ENCODE measurements at regions of chr12 and their contacts with region 1.

Region 1: DNA sequence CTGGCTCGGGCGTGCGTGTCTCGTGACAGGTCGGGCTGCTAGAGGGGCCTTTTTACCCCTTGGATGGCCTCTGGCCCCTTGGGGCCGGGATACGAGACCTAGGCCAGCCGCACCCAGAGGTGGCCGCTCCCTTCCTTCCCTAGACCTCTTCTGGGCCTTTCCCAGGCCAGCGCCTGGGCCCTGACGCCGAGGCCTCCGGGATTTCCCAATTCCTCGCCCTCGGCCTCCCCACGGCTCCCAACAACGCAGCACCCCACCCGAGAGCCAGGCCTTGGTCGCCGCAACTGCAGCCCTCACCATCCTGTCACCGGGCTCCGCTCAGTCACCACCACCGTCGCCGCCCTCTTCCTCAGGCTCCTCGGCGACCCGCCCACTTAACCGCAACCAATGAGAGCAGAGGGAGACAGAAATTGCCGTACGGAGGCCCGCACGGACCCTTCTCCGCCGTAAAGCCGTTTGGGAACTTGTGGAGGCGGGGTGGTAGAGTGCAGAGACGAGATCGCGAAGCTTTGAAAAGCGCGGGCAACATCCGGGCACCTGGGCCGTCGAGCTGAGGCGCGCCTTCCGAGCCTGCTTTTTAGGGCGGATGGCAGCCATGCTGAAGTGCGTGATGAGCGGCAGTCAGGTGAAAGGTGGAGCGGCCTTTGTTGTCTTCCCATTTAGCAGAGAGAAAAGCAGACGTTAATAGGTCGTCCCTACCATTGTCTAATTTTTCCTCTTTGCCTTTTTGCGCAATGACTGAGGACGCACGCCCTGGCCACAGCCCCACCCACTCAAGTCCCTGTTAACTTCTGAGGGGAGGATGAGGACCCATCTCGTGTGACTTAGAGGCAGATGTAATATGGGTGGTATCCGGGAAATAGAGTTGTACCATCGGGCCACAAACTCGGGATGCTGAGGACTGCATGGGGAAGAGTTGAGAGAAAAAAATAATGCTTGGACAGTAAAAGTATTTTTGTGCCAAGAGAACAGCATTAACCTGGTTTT is at the starts of genes RAD9B and VPS29:
- DNase-seq: peak; percentile 99
- H3K4me3 ChIP-seq: peak within 1 kb of the TSS; percentile 58 to 98 (median 93)
- H3K27ac ChIP-seq: peak within 1 kb of the TSS; percentile 90 to 99 (median 96)
- H3K4me1 ChIP-seq: peaks cover 24 to 53% (median 42%) of the 10 kb centered on the region in 6 donors
- H3K27me3 ChIP-seq: no peaks in the 10 kb centered on the region
- CTCF ChIP-seq: peak in 4 of 11 experiments; percentile 1 to 28 (median 20)
- POLR2A ChIP-seq: peak; percentile 68 to 84 (median 79)
- total RNA-seq, gene RAD9B: 0.67 to 2.2 (median 1.4) TPM
- total RNA-seq, gene VPS29: 77.9 to 131 (median 103) TPM

Region 2: DNA sequence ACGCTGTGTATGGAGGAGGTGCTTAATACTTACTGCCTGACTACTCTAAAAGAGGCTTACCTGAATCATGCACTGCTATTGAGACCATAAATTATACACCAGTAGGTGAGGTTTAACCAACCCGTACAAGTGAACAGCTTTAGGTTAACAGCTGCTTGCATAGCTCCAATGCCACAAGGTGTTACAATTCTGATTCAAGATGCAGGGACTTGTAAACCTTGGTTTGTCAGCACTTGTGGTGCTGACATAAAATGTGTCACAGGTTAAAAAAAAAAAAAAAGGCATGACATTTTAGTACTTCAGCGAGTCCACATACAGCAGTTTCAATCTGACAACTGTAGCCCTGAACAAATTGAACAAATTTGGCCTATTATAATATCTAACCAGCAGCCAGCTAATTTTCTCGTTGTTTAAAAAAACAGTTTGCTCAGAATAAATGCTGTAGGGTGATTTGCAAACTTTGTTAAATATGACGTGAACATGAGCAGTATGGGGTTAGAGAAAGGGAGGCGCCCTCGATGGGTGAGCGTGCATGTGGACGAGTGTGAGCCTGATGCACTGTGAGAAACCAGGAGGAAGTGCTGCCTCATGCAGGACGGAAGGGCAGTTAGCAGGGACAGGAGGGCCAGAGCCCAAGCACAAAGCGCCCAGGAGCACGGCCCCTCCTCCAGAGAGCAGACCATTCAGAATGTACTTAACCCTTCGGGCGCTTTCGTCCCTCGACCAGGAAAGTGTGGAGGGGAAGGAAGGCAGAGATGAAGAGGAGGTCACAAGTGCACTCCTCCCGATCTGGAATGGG is 557.3 kb before region 1 on chr12:
- intact Hi-C with region 1: no loop called
- DNase-seq: no peak
- H3K4me3 ChIP-seq: no peak overlapping the region
- H3K27ac ChIP-seq: peak overlapping the region in 6 of 8 donors; percentile 43 to 71 (median 64)
- H3K4me1 ChIP-seq: peaks cover 25 to 68% (median 53%) of the 10 kb centered on the region in 6 donors
- H3K27me3 ChIP-seq: no peaks in the 10 kb centered on the region
- CTCF ChIP-seq: no peak
- POLR2A ChIP-seq: no peak

Region 3: GRCh38 chr12:110449799-110450497 is 52.1 kb before region 1 on chr12 and contains the start of gene ARPC3:
- intact Hi-C with region 1: loop called (anchors 10 kb)
- DNase-seq: peak; percentile 99
- H3K4me3 ChIP-seq: peak within 1 kb of the TSS; percentile 69 to 89 (median 78)
- H3K27ac ChIP-seq: peak within 1 kb of the TSS; percentile 94 to 98 (median 96)
- H3K4me1 ChIP-seq: peaks cover 27 to 76% (median 55%) of the 10 kb centered on the region in 6 donors
- H3K27me3 ChIP-seq: no peaks in the 10 kb centered on the region
- CTCF ChIP-seq: peak; percentile 82 to 99 (median 94)
- POLR2A ChIP-seq: peak; percentile 40 to 68 (median 60)
- total RNA-seq, gene ARPC3: 301 to 568 (median 353) TPM

Region 4: DNA sequence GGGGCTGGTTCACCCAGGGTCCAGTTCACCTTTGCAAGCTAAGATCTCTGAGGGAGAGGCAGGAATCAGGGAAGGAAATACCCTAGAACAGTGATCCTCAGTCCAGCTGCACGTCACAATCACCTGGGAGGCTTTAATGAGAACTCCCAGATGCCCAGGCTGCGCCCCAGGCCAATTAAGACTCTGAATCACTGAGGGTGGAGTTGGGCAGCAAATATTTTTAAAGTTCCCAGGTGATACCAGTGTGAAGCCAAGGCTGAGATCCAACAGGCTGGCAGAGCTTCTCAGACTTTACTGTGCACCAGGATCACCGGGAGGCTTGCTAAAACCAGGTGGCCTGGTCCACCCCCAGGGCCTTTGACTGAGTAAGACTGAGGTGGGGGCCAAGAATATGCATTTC is 394.5 kb after region 1 on chr12:
- intact Hi-C with region 1: no loop called
- DNase-seq: no peak
- H3K4me3 ChIP-seq: no peak overlapping the region
- H3K27ac ChIP-seq: no peak overlapping the region
- H3K4me1 ChIP-seq: peaks cover 5 to 11% (median 9%) of the 10 kb centered on the region in 6 donors
- H3K27me3 ChIP-seq: peaks cover 0 to 12% (median 0%) of the 10 kb centered on the region in 7 donors
- CTCF ChIP-seq: no peak
- POLR2A ChIP-seq: no peak